ENCODE measurements at regions of chr2 and their contacts with region 1.

Region 1: GRCh38 chr2:170815746-170816503 is 762 bp upstream of the GAD1 start:
- DNase-seq: no peak

Region 2: GRCh38 chr2:170235860-170236679 is 579.9 kb before region 1 on chr2:
- intact Hi-C with region 1: loop called (anchors 10 kb)
- DNase-seq: no peak

Region 3: DNA sequence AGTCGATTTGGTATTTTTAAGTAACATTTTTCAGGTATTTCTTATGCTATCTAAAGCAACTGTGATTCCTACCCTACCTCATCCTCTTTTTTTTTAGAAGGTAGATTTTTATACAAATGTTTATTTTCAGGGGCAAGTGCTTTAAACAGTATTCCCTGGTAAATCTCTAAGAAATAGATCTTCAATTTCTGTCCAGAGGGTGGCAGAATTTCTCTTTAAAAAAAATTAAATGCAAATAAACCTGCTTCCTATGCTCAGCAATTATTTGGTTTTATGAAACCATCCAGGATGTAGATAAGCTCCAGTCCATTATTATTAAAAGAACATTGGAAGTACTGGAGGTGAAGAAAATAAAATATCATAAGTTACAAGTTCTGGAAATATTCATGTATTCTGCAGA is 446.0 kb before region 1 on chr2:
- intact Hi-C with region 1: loop called (anchors 2 kb)
- DNase-seq: no peak

Region 4: GRCh38 chr2:170409164-170409535 is 406.8 kb before region 1 on chr2:
- intact Hi-C with region 1: loop called (anchors 5 kb)
- DNase-seq: no peak

Region 5: DNA sequence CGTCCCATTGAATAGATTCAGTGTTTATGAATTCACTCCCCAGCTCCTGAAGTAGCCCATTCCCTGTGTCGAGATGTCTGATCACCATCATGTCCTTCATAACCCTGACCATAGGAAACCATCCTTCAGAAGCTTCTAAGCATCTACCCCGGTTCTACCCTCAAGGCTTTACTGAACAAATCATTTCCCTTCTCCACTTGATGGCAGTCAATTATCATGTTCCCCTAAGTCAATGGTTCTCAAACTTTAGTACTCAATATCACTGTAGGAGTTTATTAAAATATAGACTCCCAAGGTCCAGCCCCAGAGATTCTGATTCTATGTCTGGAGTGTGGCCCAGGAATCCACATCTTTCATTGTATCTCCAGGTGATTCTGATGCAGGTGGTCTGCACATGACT is 329.2 kb before region 1 on chr2:
- intact Hi-C with region 1: loop called (anchors 1 kb)
- DNase-seq: no peak

Region 6: GRCh38 chr2:170715062-170715931 is 100.6 kb before region 1 on chr2 and contains the start of gene SP5:
- intact Hi-C with region 1: loop called (anchors 5 kb)
- DNase-seq: no peak
- total RNA-seq, gene SP5: 0.92 TPM

Region 7: DNA sequence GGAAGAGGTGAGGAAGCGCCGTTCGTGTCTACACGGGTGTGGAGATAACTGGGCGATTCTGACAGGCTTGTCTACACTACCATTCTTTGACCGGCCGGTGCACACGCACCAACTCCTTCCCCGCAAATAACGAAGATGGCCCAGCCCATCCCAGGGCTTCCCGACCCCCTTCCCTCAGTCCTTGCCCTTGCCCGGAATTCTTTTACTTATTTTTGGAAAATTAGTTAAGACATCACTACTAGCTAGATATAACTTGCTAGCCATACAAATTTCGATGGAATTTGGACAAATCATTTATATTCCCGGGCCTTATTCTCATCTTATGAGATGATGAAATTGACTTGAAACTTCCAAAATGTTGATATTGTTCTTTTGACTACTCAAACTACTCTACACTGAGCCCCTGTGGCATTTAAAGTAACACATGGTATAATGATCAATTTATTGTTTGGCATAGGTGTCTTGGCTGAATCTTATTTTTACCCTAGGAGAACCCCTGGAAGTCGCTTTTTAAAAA is 44.4 kb before region 1 on chr2:
- intact Hi-C with region 1: no loop called
- DNase-seq: no peak

Region 8: GRCh38 chr2:171271971-171272436 is 456.1 kb after region 1 on chr2:
- intact Hi-C with region 1: no loop called
- DNase-seq: no peak